ENCODE measurements at regions of chr5 and their contacts with region 1.

Region 1: GRCh38 chr5:140244525-140245025 is 58.3 kb downstream of the PFDN1 start:
- DNase-seq: peak; percentile 83
- H3K27ac ChIP-seq: peak overlapping the region; percentile 53; the same call in 1 of the 2 replicates
- CTCF ChIP-seq: peak; percentile 93

Region 2: GRCh38 chr5:140261403-140262171 is 17.0 kb after region 1 on chr5:
- CTCF ChIA-PET with region 1: interaction called, 12 read pairs
- POLR2A ChIA-PET with region 1: no interaction called
- DNase-seq: peak; percentile 97
- H3K27ac ChIP-seq: 0 out of 2 replicates have a peak overlapping the region, but pooled peaks have one; percentile 30
- CTCF ChIP-seq: no peak

Region 3: DNA sequence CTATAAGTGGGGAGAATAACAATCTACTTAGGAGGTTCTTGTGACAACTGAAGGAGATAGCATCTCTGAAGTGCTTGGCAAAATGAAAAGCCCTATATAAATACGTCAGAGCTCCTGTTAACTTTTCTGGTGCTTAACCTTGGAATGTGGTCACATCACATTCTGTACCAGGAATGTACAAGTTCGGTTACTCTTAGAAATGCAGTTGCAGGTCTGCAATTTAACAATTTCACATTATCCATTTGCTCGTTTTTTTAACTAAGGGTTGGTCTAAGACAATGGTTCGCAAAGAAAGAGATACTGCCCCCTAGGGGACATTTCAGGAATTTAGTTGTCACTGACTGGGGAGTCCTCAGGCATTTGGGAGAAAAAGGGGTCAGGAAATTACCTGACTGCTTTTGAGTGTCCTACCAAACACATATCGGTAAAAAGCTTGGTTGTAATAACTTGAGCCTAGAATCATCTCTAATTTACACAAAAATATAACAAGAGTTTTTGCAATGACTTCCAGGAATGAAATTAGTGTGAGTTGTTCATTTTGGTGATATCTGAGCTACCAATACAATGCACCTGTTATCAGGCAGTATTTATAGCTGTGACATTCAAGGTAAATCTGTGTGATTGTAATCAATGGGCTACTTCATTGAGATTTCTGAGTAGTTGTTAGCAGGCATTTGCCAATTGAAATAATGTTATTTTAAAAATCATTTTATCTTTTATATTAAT is 107.2 kb after region 1 on chr5:
- CTCF ChIA-PET with region 1: interaction called, 61 read pairs
- POLR2A ChIA-PET with region 1: interaction called, 17 read pairs
- DNase-seq: peak; percentile 78
- H3K27ac ChIP-seq: no peak overlapping the region
- CTCF ChIP-seq: peak; percentile 88